Mammary epithelial cell (primary cell): ENCODE measurements at regions of chr1 and their contacts with region 1.

Region 1: GRCh38 chr1:166258017-166258416 is 91.2 kb upstream of the FAM78B start:
- DNase-seq: no peak
- H3K4me3 ChIP-seq: no peak overlapping the region
- H3K27ac ChIP-seq: no peak overlapping the region
- H3K4me1 ChIP-seq: no peaks in the 10 kb centered on the region
- H3K27me3 ChIP-seq: no peaks in the 10 kb centered on the region
- CTCF ChIP-seq: no peak

Region 2: GRCh38 chr1:165877940-165878556 is 380.0 kb before region 1 on chr1:
- CTCF ChIA-PET with region 1: no interaction called
- dilution Hi-C with region 1: no loop called
- in situ Hi-C with region 1: no loop called
- intact Hi-C with region 1: no loop called
- DNase-seq: no peak
- H3K4me3 ChIP-seq: no peak overlapping the region
- H3K27ac ChIP-seq: no peak overlapping the region
- H3K4me1 ChIP-seq: peaks cover 13% of the 10 kb centered on the region
- H3K27me3 ChIP-seq: no peaks in the 10 kb centered on the region
- CTCF ChIP-seq: no peak

Region 3: DNA sequence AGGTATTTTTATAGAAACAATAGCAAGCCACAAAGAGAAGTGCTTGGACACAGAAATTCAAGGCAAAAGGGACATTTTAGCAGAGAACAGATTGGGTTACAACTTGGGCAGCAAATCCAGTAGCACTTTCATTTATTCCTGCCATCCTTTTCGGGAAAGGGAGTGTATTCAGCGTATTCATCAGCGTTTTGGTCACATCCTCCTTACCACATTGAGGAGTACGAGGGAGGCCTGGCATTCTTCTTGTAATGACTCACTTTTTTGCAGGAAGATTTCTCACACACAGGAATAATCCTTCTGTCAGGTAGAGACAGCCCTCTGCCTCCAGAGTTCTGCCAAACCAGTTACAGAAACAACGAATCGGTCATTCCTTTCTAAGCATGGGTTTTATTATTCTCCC is 73.1 kb before region 1 on chr1:
- CTCF ChIA-PET with region 1: no interaction called
- dilution Hi-C with region 1: loop called (anchors 5 kb)
- in situ Hi-C with region 1: no loop called
- intact Hi-C with region 1: no loop called
- DNase-seq: peak; percentile 88
- H3K4me3 ChIP-seq: no peak overlapping the region
- H3K27ac ChIP-seq: peak overlapping the region; percentile 31
- H3K4me1 ChIP-seq: peaks cover 31% of the 10 kb centered on the region
- H3K27me3 ChIP-seq: no peaks in the 10 kb centered on the region
- CTCF ChIP-seq: peak in 1 of 2 donors; percentile 14

Region 4: DNA sequence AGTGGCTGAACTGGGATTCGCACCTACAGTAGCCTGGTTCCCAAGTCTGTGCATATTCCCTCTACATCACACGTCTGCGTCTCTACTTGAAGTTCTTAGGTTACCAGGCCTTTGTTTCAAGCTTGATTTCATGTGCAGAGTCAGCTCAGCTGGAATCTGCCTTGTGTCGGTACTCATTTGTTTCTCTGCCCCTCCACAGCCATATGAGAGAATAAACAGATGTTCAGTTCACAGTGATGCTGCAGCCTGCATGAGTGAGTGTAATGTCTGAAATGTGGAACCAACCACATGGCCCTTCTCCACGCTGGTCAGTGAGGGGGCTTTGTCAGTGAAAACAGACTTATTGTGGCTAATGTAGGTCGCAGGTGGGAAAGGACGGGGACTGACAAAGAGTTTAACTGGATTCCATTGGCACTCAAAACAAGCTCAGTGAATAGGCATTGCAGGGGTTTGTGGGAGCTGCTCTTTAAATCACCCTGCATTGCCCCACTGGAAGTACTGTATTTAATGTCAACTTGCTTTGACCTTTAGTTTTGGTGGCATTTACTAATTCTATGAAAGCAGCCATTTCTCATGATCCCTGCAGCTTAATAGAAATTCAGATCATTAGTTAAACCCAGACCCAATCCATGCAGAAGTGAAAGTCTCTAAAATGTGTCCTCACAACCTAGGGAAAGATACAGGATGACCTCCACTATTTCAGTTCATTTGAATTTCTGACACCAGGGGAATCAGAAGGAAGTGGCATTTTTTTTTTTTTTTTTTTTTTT is 45.2 kb after region 1 on chr1:
- CTCF ChIA-PET with region 1: no interaction called
- dilution Hi-C with region 1: loop called (anchors 5 kb)
- in situ Hi-C with region 1: no loop called
- intact Hi-C with region 1: no loop called
- DNase-seq: no peak
- H3K4me3 ChIP-seq: no peak overlapping the region
- H3K27ac ChIP-seq: no peak overlapping the region
- H3K4me1 ChIP-seq: no peaks in the 10 kb centered on the region
- H3K27me3 ChIP-seq: no peaks in the 10 kb centered on the region
- CTCF ChIP-seq: no peak

Region 5: GRCh38 chr1:166479052-166479631 is 221.1 kb after region 1 on chr1:
- CTCF ChIA-PET with region 1: no interaction called
- dilution Hi-C with region 1: no loop called
- in situ Hi-C with region 1: no loop called
- intact Hi-C with region 1: no loop called
- DNase-seq: peak; percentile 9
- H3K4me3 ChIP-seq: no peak overlapping the region
- H3K27ac ChIP-seq: no peak overlapping the region
- H3K4me1 ChIP-seq: no peaks in the 10 kb centered on the region
- H3K27me3 ChIP-seq: no peaks in the 10 kb centered on the region
- CTCF ChIP-seq: peak; percentile 67 to 70